ENCODE measurements at regions of chr6 and their contacts with region 1.

Region 1: DNA sequence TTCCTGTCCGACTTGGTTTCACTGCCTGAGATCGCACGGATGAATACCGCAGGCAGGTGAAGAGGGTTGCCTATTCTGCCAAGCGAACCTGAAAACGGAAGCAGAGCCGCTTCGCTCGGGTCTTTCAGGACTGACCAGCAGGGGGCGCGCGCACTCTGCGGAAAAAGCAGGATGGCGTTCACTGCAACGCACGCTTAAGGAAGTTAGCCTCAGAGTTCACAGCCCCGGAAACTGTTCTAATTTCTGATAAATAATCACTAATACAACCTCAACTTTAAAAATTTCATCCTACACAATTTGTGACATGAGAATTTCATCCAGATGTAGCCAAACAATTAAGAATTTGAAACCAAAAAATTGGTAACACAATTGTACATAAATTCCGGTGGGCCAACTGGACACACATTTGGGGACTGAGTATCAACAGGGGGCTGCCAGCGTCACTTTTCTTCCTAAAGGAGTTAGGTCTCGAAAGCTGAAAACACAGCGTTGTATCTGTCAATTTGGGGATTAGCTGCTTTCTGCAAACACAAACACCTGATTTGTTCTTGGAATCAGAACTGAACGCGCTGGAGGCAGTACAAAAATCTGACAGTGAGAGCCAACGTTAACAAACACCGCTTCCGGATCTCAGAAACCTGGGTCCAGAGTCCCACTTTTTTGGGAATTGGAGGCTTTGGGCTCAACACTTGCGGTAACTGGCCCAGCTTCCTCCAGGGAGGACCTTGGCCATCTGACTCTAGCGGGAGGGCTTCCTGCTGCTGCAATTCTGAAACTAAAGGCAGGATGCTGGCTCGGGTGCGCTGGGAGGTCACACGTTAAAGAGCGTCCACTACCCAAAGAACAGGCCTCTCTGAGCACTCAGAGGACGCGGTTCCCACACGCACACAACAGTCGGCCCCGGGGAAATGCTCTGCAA is 8.8 kb downstream of the PXDC1 start:
- DNase-seq: peak; percentile 94
- ATAC-seq: peak; percentile 96
- H3K4me3 Mint-ChIP-seq: no peak overlapping the region
- H3K27ac Mint-ChIP-seq: peak overlapping the region; percentile 14
- H3K4me1 Mint-ChIP-seq: peaks cover 3% of the 10 kb centered on the region
- H3K27me3 Mint-ChIP-seq: peaks cover 10% of the 10 kb centered on the region

Region 2: DNA sequence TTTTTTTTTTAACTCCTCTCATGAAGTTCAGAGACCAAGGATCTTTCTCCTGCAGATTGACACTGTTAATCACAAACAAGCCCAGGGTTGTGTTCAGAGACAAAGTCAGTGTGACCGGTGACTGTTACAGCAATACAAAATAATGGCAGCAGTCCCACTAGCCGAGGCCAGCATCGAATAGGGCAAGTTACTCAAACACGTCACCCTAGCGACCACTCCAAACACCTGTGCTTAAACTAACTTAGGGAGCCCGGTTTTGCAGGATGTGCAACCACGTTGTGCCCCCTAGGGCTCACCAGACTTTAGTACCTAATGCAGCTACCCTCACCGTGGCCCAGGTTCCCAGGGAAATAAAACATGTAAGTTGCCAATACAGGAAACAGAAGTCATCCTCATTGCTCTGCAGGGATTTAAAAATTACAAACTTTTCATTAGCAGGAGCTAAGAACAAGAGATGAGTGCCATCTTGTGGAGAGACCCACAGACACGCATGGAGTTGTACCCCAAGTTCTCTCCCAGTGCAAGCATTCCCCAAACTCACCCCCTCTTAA is 144.5 kb after region 1 on chr6:
- CTCF ChIA-PET with region 1: interaction called, 3 read pairs
- POLR2A ChIA-PET with region 1: no interaction called
- intact Hi-C with region 1: loop called in 1 of 2 experiments (anchors 1 kb)
- DNase-seq: peak; percentile 14
- ATAC-seq: peak; percentile 23
- H3K4me3 Mint-ChIP-seq: no peak overlapping the region
- H3K27ac Mint-ChIP-seq: no peak overlapping the region
- H3K4me1 Mint-ChIP-seq: no peaks in the 10 kb centered on the region
- H3K27me3 Mint-ChIP-seq: peaks cover 2% of the 10 kb centered on the region

Region 3: GRCh38 chr6:3977875-3978711 is 235.4 kb after region 1 on chr6:
- CTCF ChIA-PET with region 1: interaction called, 57 read pairs
- POLR2A ChIA-PET with region 1: no interaction called
- intact Hi-C with region 1: loop called (anchors 1 kb)
- DNase-seq: peak; percentile 68
- ATAC-seq: peak; percentile 99
- H3K4me3 Mint-ChIP-seq: no peak overlapping the region
- H3K27ac Mint-ChIP-seq: no peak overlapping the region
- H3K4me1 Mint-ChIP-seq: peaks cover 11% of the 10 kb centered on the region
- H3K27me3 Mint-ChIP-seq: peaks cover 2% of the 10 kb centered on the region

Region 4: GRCh38 chr6:4008324-4009047 is 265.8 kb after region 1 on chr6:
- CTCF ChIA-PET with region 1: interaction called, 11 read pairs
- POLR2A ChIA-PET with region 1: no interaction called
- intact Hi-C with region 1: loop called (anchors 1 kb)
- DNase-seq: no peak
- ATAC-seq: peak; percentile 57
- H3K4me3 Mint-ChIP-seq: no peak overlapping the region
- H3K27ac Mint-ChIP-seq: peak overlapping the region; percentile 58
- H3K4me1 Mint-ChIP-seq: peaks cover 51% of the 10 kb centered on the region
- H3K27me3 Mint-ChIP-seq: no peaks in the 10 kb centered on the region

Region 5: DNA sequence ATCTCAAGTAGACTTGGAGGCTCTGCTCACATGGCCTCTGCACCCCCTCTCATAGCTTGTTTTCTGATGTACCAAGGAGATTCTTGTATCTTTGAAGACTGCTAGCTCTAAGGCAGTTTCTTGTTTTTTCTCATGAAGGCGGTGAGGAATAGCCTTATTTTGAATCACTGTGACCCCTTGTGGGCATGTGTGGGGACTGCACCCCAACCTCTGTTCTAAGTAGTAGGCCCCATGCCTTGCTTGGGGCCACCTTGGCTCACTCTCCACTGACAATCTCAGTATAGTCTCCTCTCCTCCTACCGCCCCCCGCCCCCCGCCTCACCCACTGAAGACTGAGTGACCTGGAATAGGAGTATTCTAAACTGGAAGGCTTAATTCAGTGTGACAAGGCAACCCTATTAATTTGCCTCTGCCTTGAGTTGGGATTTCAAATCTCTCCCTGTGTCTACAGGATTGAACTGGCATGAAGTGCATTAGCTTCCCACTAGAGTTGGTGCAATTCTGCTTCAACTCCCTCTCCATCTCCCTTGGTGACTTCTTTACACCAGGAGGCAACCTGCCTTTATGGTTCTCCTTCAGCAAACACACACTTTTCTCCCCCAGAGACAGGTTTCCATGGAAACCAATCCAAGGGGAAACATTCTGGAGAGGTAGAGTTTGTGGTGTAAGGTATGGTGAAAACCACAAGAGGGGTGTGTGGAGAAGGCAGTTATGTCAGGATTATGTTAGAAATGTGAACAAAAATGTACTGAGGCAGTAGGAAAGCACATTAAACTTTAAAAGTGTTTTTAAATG is 468.1 kb after region 1 on chr6:
- CTCF ChIA-PET with region 1: interaction called, 11 read pairs
- POLR2A ChIA-PET with region 1: no interaction called
- intact Hi-C with region 1: loop called (anchors 1 to 2 kb)
- DNase-seq: peak; percentile 82
- ATAC-seq: peak; percentile 98
- H3K4me3 Mint-ChIP-seq: no peak overlapping the region
- H3K27ac Mint-ChIP-seq: no peak overlapping the region
- H3K4me1 Mint-ChIP-seq: peaks cover 15% of the 10 kb centered on the region
- H3K27me3 Mint-ChIP-seq: peaks cover 6% of the 10 kb centered on the region

Measured in activated CD4-positive, alpha-beta T cell treated with anti-CD3 and anti-CD28 coated beads for 36 hours (primary cell).